ENCODE measurements at regions of chr1 and their contacts with region 1.

Region 1: DNA sequence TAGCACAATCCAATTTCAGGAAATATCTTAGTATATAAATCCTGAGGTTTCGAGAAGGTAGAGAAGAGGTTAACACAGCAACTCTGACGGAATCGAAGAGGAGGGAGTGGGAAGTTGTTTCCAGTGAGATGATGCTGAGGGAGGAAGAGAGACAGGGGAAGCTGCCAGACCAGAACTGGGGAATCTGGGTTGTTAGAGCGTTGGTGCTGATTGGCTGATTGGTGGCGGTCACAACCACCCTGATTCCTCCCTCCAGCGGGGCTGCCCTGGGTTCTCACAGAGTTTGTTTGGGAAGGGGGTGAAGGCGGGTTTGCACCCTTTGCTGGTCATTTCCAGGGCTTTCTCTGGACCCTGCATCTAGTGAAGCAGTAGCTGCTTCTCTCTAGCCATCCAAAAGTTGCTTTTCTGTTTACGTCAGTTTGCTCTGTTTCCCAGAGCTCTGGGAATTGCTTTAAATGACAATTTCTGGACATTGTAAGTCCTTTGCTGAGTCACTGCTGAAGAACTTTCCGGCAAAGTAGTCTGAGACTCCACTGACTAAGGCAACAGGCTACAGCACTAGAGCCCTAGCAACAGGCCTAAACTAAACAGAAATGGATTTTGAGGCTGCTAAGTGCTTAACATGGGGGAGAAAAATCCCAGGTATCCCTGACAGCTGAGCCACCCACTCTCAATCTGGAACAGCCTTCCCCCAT is 90.1 kb downstream of the TENT5C start:
- DNase-seq: peak; percentile 42
- H3K4me3 ChIP-seq: no peak overlapping the region
- H3K27ac ChIP-seq: peak overlapping the region; percentile 2
- H3K4me1 ChIP-seq: no peaks in the 10 kb centered on the region
- H3K27me3 ChIP-seq: peaks cover 6 to 11% of the 10 kb centered on the region in 2 experiments
- CTCF ChIP-seq: no peak
- POLR2A ChIP-seq: no peak

Region 2: GRCh38 chr1:117654493-117655219 is 41.3 kb before region 1 on chr1:
- CTCF ChIA-PET with region 1: no interaction called
- POLR2A ChIA-PET with region 1: no interaction called
- dilution Hi-C with region 1: no loop called
- intact Hi-C with region 1: no loop called
- DNase-seq: no peak
- H3K4me3 ChIP-seq: no peak overlapping the region
- H3K27ac ChIP-seq: no peak overlapping the region
- H3K4me1 ChIP-seq: peaks cover 14% of the 10 kb centered on the region
- H3K27me3 ChIP-seq: no peaks in the 10 kb centered on the region
- CTCF ChIP-seq: no peak
- POLR2A ChIP-seq: no peak

Region 3: DNA sequence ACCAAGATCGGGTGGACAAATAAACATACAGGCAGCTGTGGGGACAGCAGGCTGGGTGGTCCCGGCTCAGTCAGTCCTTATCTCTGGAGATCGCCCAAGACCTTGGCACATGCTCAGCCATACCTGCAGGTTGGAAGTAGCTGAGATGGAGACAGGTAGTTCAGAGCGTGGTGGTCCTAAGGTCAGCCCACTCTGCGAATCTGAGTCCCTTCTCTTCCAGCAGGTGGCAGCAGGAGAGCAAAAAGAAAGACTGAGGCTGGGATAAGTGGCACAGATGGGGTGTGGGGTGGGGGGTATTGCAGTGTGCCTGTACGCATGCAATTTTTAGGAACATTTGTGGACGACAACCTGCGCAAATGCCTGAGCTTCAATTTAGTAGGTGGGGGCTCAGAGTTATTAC is 14.8 kb after region 1 on chr1:
- CTCF ChIA-PET with region 1: interaction called, 12 read pairs
- POLR2A ChIA-PET with region 1: no interaction called
- dilution Hi-C with region 1: no loop called
- intact Hi-C with region 1: no loop called
- DNase-seq: no peak
- H3K4me3 ChIP-seq: no peak overlapping the region
- H3K27ac ChIP-seq: no peak overlapping the region
- H3K4me1 ChIP-seq: no peaks in the 10 kb centered on the region
- H3K27me3 ChIP-seq: peaks cover 4 to 5% of the 10 kb centered on the region in 2 experiments
- CTCF ChIP-seq: peak; percentile 14 to 35
- POLR2A ChIP-seq: no peak

Measured in endothelial cell of umbilical vein (primary cell).